HEK293T (cell line): ENCODE measurements at regions of chr12 and their contacts with region 1.

Region 1: DNA sequence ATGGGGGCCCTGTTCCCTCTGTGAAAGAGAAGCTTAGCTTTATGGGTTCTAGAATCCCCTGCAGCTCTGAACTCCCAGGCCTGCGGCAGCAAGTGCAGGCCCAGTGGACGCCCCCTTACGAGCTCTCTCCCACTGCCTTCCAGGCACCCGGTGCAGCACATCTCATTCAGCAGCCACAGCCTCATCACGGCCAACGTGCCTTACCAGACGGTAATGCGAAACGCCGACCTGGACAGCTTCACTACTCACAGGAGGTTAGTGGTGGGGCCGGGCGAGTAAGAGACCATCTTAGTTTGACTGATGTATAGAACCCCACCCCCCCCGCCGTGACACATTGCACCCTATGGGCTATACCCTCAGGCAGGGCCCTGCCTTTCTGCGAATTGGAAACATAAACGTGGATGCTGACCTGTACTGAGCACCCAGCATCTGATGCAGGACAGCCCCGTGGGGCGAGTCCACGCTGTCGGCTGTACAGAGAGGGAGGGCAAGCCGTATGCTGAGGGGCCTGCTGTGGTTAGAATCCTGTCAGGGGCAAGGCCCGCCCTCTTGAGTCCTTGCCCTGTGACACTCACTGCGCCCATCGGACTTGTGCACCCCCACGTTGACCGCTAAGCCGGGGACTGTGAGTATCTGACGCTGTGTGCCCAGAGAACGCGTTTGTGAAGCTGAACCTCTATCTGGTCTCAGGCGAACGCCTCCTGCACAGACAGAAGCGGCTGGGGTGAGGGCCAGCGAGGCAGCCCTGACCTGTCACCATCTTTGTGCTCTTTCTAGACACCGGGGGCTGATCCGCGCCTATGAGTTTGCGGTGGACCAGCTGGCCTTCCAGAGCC is 71.7 kb downstream of the TESC start:
- DNase-seq: no peak

Region 2: DNA sequence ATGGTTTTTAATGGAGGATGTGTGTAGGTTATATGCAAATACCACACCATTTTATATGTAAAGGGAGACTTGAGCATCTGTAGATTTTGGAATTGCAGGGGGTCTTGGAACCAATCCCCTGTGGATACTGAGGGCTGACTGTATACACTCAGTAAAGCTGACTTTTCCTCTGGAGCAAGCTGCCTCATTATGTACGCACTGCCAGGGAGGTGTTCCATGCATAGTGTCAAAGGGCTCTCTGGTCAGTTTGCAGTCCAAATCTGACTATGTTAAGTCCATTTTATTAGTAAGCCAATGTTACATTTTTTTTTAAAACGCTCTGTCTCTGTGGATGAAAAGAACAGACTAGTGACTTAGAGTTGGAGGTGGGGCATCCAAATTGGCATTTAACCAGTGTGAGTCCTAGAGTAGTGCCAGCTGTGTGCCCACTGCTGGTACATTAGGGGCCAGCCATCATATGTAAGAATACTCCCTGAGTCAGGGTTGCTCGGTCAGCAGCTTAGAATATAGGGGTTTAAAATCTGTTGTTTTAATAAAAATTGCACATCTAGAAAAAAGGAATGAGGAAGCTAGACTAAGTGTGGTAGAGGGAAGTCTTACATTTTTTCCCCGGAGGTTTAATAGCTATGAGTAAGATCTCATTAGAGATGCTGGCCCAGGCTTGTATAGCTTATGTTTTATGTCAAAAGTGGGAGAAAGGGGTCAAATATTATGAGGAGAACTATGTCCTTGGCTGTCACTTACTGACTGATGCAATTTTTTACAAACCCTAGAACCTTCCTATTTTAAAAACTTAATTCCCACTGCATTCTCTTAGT is 15.3 kb before region 1 on chr12:
- CTCF ChIA-PET with region 1: no interaction called
- POLR2A ChIA-PET with region 1: no interaction called
- DNase-seq: no peak

Region 3: GRCh38 chr12:117045160-117046010 is 17.9 kb after region 1 on chr12:
- CTCF ChIA-PET with region 1: no interaction called
- POLR2A ChIA-PET with region 1: no interaction called
- DNase-seq: no peak

Region 4: GRCh38 chr12:117119592-117120198 is 92.2 kb after region 1 on chr12:
- CTCF ChIA-PET with region 1: interaction called, 14 read pairs
- POLR2A ChIA-PET with region 1: no interaction called
- DNase-seq: peak; percentile 70